GM10248 (cell line): ENCODE measurements at regions of chr19 and their contacts with region 1.

Region 1: DNA sequence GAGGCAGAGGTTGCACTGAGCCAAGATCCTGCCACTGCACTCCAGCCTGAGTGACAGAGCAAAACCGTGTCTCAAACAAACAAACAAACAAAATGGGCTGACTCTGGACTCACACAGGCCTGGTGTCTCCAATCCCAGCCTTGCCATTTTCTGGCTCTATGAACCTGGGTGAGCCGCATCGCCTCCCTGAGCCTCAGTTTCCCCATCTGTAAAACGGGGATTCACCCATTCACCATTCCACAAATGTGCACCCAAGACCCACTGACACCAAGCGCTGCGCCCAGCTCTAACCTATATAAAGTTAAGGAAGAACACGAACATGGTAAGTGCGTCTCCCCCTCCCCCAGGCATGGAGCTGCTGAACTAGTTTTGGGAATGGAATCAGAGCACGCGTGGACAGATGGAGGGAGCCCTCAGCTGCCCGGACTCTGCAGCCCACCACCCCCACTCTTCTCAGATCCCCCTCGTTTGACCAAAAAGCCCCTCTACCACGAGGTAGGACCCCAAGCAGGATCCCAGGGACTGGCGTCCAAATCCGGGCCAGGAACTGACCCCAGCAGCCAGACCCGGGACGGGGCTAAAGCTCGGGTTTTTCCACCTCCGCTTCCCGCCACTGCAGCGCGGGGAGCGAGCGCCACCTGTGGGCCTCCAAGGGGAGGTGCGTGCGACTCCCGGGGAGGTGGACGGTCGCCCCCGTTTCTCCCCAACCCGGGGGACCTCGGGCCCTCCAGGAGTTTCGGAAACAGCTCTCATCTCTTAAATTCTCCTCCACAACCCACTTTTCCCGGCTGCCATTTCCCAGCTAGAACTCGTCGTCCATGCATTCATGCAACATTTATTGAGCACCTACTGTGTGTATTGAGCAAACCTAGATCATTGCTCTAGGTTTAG is 33.0 kb upstream of the ADGRE5 start:
- DNase-seq: peak; percentile 89
- CTCF ChIP-seq: peak; percentile 95

Region 2: DNA sequence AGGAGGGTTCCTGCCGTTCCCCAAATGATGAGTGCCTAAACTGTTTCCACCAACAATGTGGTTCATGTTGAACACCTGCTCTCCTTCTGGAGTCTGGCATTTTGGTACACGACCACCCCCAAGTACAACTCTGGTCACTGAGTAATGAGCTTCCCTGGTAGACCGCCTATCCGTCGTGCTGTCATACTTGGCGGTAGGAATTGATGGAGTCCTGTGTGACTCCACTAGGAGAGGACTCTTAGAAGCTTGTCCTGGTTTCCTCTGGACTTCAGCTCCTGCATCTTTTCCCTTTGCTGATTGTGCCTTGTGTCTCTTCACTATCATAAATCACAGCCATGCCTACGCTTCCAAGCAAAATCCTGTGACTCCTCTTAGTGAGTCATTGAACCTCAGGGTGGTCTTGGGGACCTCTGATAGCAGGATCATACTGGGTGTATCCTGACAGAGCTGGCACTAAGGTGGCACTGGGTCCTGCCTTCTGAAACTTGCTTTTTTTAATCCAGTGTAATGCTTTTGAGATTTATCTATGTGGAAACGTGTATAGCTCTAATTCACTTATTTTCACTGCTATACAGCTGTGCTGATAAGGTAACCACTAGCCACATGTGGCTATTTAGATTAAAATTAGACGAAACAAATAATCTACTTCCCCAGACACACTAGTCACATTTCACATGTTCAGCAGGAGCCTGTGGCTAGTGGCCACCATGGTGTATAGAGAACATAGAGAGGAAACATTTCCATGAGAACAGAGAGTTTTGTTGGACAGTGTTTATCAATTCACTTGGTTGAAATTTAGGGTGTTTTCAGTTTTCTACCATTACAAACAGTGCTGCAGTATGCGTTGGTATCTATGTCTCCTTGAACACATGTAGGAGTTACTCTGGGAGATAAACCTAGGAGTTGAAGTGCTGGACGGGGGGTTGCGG is 205.7 kb before region 1 on chr19:
- CTCF ChIA-PET with region 1: interaction called, 19 read pairs
- POLR2A ChIA-PET with region 1: no interaction called
- DNase-seq: no peak
- CTCF ChIP-seq: no peak

Region 3: GRCh38 chr19:14198384-14199376 is 149.6 kb before region 1 on chr19:
- CTCF ChIA-PET with region 1: interaction called, 52 read pairs
- POLR2A ChIA-PET with region 1: no interaction called
- DNase-seq: no peak
- CTCF ChIP-seq: peak; percentile 17

Region 4: GRCh38 chr19:14366498-14366915 is 18.3 kb after region 1 on chr19:
- CTCF ChIA-PET with region 1: interaction called, 106 read pairs
- POLR2A ChIA-PET with region 1: no interaction called
- DNase-seq: peak; percentile 65
- CTCF ChIP-seq: no peak

Region 5: DNA sequence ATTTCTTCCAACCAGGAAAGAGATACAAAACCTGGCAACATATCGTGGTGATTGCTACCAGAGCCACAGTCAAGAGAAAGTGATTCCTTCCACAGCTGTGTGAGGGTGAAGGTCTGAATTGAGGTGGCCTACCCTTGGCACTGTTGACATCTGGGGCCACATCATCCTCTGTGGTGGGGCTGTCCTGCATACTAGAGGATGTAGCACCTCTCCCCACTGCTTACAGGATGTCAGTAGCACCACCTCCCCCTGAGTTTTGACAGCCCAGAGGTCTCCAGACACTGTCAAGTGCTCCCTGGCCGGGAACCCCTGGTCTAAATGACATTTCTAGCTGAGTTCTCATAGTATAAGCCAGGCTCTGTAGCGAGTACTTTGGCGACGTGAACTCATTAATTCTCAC is 111.5 kb after region 1 on chr19:
- CTCF ChIA-PET with region 1: no interaction called
- POLR2A ChIA-PET with region 1: no interaction called
- DNase-seq: no peak
- CTCF ChIP-seq: no peak

Region 6: DNA sequence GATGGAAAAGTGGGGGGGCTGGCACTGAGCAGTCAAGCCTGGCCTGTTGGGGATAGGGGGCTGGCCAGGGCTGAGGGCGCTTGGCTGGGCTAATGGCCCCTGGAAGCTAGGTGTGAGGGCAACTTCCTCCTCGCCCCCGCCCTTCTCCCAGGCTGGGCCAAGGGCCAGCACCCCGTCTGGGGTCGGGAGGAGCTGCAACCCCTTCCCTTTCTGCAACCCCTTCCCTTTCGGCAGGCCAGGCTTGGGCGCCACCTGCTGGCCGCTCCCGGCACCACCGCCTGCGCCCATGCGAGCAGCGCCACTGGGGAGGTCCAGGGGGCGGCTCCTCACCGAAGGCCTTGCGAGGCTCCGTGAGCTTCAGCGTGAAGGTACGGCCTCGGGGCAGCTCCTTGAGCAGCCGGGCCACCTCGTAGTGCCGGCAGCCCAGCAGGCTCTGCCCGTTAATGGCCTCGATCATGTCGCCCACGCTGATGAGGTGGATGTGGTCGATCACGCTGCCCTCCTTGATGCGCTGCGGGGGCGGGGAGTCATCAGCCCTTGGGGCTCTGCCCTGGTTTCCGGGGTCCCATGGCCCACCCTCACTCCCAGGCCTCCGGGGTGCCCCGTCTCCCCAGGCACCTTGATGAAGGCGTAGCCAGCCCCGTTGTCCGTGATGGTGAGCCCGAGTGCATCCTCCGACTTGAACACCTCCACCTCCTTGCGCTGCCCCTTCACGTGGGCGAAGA is 131.9 kb after region 1 on chr19:
- CTCF ChIA-PET with region 1: interaction called, 11 read pairs
- POLR2A ChIA-PET with region 1: no interaction called
- DNase-seq: peak; percentile 87
- CTCF ChIP-seq: peak; percentile 98

Region 7: DNA sequence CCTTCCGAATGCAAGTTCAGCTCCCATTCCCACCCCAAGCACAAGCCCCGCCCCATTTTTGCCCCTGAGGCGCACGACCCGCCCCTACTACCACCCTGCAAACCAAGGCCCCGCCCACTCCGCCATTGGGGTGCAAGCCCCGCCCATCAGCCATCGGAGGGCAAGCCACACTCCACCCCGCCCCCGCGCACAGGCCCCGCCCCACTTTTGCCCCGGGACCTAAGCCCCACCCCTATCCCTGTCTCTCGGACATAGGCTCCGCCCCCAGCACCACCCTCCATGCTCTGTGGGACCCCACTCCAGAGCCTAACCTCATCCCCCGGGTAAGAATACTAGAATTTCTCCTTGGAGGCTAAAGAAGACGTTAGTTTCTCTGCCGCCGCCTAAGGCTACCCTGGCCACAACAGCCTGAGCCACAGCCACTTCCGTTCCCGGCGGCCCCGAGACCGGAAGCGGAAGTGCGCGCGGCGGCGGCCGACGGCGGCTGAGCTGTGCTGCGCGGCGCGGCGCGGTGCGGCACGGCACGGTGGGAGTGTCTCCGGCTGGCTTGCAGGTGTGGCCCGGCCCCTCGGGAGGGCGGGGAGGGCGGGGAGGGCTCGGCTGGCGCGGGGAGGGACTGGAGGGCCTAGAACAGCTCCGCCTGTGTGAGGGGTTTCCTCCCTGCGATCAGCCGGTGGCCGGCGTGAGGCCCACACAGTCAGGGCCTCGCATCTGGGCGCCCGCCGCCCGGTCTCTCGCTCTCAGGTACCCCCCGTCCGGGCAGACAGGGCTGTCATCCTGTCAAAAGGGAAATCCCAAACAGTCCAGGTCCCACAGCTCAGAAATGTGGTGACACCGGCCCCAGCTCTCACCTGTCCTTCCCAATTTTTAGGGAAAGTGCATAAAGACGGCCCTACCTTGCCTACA is 341.6 kb after region 1 on chr19 and contains the start of gene ZNF333:
- CTCF ChIA-PET with region 1: no interaction called
- POLR2A ChIA-PET with region 1: no interaction called
- DNase-seq: peak; percentile 97
- CTCF ChIP-seq: no peak